Left cardiac atrium (tissue), 4 donors: ENCODE measurements at regions of chr1 and their contacts with region 1.

Region 1: DNA sequence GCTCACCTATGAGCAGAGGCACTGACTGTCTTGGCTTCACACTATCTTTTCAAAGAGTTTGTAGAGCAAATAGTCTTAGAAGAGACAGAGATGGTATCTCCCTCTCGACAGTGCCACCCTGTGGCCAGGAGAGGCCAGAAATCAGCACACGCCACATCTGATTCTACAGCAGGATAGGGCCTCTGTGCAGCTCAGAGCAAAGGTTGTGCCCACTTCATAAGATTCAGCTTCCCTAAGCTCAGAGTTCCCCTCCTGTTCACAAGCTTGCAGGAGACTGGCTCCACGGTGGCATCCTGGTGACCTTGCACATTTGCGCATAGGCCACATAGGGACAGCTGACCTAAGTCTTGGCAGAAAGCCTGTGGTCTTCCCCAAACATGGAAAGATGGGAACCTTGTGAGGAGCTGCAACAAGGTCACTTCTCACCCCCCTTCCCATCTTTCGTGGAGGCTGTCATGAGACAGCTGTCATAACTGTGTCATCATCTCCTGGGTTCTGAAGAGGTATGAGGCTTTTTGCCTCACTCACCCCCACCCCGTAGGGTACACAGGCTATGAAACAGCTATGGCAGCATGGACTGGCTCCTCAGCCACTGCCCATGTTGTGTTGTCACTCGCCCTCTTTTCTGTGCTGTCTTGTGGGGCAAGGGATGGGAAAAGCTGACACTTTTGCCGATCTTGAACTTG is 3.0 kb downstream of the ITLN2 start:
- DNase-seq: peak; percentile 66
- ATAC-seq: peak; percentile 82 to 85

Region 2: GRCh38 chr1:160726498-160727315 is 224.9 kb before region 1 on chr1:
- intact Hi-C with region 1: loop called in 1 of 2 experiments (anchors 5 kb)
- DNase-seq: peak; percentile 49
- ATAC-seq: peak; percentile 83 to 93

Region 3: DNA sequence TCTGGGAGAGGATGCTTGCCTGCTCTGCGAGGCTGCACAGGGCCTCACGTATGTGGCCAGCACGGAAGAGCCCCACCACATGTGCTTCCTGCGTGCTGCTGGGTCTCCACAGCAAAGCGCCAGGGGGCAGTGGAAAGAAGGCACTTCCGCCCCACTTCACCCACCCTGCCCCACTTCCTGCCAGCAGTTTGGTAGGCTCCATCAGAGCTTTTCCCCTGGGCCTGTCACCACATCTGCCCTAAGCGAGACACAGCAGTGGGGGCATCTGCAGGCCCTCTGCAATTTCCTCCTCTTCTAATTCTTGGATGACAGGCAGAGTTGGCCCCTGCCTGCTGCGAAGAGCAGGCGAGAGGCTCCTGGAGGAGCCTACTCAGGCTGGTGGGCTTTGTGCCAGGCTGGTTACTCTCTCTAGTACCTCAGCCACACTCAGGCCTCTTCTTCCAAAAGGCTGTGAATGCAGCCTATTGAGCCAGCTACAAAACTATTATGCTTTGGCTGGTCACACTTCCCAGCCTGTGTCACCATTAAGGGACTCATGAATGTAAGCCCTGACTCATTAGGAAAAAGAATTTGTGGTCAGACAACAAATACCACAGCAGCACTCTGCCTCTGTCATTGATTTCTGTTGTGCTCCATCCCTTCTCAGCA is 113.9 kb before region 1 on chr1:
- intact Hi-C with region 1: loop called (anchors 5 kb)
- DNase-seq: peak; percentile 32
- ATAC-seq: peak; percentile 70 to 87